ENCODE measurements at regions of chr20 and their contacts with region 1.

Region 1: DNA sequence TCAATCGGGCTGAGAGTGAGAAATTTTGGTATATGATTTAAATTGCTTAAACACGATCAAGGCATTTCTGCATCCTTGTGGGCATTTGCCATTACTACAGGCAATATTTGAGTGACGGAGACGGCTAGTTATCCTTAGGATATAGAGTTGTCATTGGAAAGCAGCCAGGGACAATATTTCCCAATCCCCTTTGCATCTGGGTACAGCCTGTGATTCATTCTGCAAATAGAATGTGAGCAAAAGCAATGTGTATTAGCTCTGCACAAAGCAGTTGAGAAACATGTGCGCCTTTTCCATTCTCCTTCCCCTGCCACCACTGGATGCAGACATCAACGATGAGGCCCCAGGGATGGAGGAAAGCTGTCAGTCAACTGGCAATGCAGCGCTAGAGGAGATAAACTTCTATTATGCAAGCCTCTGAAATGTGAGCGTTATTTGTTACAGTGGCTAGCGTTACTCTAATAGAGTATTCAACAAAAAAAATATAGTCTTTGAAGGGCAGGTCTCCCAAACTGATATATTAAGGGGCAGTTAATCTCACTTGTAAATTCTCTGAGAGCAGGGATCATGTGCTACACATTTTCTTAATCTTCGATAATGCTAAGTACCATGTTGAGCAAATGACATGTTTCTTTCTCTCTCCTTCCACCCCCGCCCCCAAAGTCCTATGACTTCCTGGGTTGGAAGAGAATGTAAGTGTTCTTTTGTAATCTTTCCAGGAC is 37.1 kb upstream of the NCOA3 start:
- DNase-seq: peak; percentile 60 to 80
- ATAC-seq: peak; percentile 90 to 95 (median 93)
- H3K4me3 ChIP-seq: no peak overlapping the region
- H3K27ac ChIP-seq: peak overlapping the region; percentile 66
- H3K4me1 ChIP-seq: peaks cover 18% of the 10 kb centered on the region
- H3K27me3 ChIP-seq: no peaks in the 10 kb centered on the region
- CTCF ChIP-seq: peak; percentile 41

Region 2: GRCh38 chr20:46939031-46939965 is 525.2 kb before region 1 on chr20:
- intact Hi-C with region 1: no loop called
- DNase-seq: no peak
- ATAC-seq: no peak
- H3K4me3 ChIP-seq: no peak overlapping the region
- H3K27ac ChIP-seq: no peak overlapping the region
- H3K4me1 ChIP-seq: no peaks in the 10 kb centered on the region
- H3K27me3 ChIP-seq: no peaks in the 10 kb centered on the region
- CTCF ChIP-seq: no peak

Region 3: DNA sequence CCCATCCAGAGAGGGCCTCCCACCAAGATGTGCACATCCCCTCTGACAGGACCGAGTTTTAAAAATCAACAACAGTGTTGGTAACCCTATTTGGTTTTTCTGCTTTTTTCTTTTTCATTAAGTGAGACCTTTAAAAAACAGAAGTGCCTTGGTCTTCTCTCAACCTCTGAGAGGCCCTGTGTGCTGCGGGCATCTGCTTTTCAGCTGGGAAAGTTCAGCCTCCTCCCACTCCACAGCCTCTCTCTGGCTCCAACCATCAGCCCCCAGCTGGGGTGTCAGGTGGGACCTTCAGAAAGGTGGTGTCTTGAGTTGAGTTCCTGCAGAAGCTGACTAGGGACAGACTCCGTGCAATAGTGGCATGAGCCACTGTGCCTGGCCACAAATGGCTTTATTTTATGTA is 43.5 kb before region 1 on chr20:
- intact Hi-C with region 1: loop called in 1 of 2 experiments (anchors 5 kb)
- DNase-seq: no peak
- ATAC-seq: no peak
- H3K4me3 ChIP-seq: no peak overlapping the region
- H3K27ac ChIP-seq: no peak overlapping the region
- H3K4me1 ChIP-seq: peaks cover 12% of the 10 kb centered on the region
- H3K27me3 ChIP-seq: no peaks in the 10 kb centered on the region
- CTCF ChIP-seq: no peak

Region 4: GRCh38 chr20:47521059-47521808 is 56.7 kb after region 1 on chr20:
- intact Hi-C with region 1: no loop called
- DNase-seq: no peak
- ATAC-seq: no peak
- H3K4me3 ChIP-seq: no peak overlapping the region
- H3K27ac ChIP-seq: no peak overlapping the region
- H3K4me1 ChIP-seq: no peaks in the 10 kb centered on the region
- H3K27me3 ChIP-seq: no peaks in the 10 kb centered on the region
- CTCF ChIP-seq: no peak

Measured in psoas muscle (tissue), 8 donors.